Activated CD4-positive, alpha-beta T cell treated with anti-CD3 and anti-CD28 coated beads, Interleukin-2, amount 10 ng/mL, durations not matched to agents 7 days and 5 days (primary cell): ENCODE measurements at regions of chr2 and their contacts with region 1.

Region 1: GRCh38 chr2:64653349-64654062 is at the start of gene SERTAD2:
- DNase-seq: peak; percentile 87
- H3K4me3 Mint-ChIP-seq: peak within 1 kb of the TSS; percentile 88
- H3K27ac Mint-ChIP-seq: peak within 1 kb of the TSS; percentile 91
- H3K4me1 Mint-ChIP-seq: peaks cover 65% of the 10 kb centered on the region
- H3K27me3 Mint-ChIP-seq: no peaks in the 10 kb centered on the region
- total RNA-seq, gene SERTAD2: 16.9 to 18.7 TPM

Region 2: DNA sequence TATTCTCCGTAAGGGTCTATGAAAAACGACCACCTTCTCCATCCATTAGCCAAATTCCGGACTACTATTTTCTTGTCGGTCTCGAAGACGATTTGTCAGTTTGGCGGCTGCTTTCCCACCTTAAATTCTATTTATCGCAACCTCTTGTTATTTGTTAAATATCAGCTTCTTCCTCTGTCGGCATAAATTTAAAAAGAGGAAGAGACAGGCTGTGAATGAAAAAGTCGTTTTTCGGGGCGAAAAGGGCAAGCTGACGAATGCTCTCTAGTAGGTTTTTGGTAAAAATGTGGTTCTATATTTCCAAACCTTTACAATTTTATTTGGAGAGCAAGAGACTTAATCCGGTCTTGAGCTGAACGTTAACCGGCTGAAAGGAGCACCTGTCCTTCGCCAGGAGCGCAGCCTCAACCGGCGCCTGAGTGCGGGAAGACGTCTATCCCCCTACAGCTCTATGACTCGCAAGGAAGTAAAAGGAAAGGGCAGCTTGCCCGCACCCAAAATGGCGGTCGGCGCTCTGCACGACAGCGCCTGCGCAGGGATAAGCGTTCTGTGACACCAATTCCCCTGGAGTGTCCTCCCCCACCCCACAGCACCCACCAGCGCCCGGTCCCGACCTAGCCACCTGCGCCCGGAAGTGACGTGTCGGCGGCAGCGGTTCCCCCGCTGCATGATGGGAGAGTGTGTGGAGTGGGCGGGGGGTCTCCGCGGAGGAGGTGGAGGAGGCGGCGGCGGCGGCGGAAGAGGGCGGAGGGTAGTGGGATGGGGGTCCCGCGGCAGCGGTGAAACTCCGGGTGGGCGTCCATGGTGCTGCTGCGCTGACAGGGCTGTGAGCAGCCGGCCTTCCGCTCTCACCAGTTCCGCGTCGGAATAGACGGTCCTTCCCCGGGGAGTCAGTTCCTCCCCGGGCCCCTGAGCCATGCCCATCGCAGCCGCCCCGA is 129.6 kb before region 1 on chr2 and contains the start of gene AFTPH:
- CTCF ChIA-PET with region 1: interaction called, 11 read pairs
- POLR2A ChIA-PET with region 1: no interaction called
- DNase-seq: peak; percentile 100
- H3K4me3 Mint-ChIP-seq: peak within 1 kb of the TSS; percentile 99
- H3K27ac Mint-ChIP-seq: peak within 1 kb of the TSS; percentile 99
- H3K4me1 Mint-ChIP-seq: peaks cover 41% of the 10 kb centered on the region
- H3K27me3 Mint-ChIP-seq: peaks cover 5% of the 10 kb centered on the region
- total RNA-seq, gene AFTPH: 31.1 to 38.9 TPM

Region 3: GRCh38 chr2:64675860-64676259 is 22.4 kb after region 1 on chr2:
- CTCF ChIA-PET with region 1: interaction called, 18 read pairs
- POLR2A ChIA-PET with region 1: no interaction called
- DNase-seq: peak; percentile 22
- H3K4me3 Mint-ChIP-seq: no peak overlapping the region
- H3K27ac Mint-ChIP-seq: no peak overlapping the region
- H3K4me1 Mint-ChIP-seq: peaks cover 36% of the 10 kb centered on the region
- H3K27me3 Mint-ChIP-seq: no peaks in the 10 kb centered on the region

Region 4: GRCh38 chr2:64727013-64727767 is 73.7 kb after region 1 on chr2:
- CTCF ChIA-PET with region 1: interaction called, 12 read pairs
- POLR2A ChIA-PET with region 1: no interaction called
- DNase-seq: peak; percentile 24
- H3K4me3 Mint-ChIP-seq: peak overlapping the region; percentile 10
- H3K27ac Mint-ChIP-seq: peak overlapping the region; percentile 89
- H3K4me1 Mint-ChIP-seq: peaks cover 55% of the 10 kb centered on the region
- H3K27me3 Mint-ChIP-seq: no peaks in the 10 kb centered on the region

Region 5: DNA sequence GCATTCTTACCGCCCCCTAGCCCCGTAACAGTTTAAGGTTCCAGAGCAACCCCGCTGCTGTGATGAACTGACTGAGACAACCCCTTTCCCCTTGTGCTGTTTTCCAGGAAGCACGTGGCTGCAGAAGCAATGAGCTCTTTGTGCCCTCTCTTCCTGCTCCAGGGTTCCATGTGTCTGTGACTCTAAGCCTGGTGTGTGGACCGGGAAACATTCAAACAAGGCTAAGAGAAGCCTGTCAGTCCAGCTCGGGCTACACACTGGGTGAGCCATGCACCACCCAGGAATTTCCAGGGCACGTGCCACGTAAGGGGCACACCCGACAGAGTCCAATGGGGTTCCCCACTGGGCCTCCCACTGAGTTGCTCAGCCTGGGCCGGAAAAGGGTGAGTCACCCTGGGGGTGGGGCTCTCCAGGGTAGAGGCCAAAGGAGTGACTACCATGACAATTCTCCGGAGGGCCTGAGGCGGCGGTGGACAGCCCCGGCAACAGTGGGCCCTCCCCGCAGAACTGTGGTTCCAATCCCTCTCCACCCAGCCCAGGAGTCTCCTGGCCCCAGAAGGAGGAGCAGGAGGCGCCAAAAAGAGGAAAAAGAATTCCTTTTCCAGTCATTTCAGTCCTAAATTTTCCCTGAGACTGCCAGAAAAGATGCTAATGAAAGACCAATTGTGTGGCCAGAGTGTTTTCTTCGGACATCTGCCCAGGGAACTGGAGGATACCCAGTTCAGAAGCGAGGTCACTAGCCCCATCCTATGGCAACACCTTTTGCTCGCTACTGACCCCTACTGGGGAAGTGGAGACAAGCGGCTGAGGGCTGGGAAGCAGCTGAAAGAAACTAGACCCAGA is 177.8 kb after region 1 on chr2:
- CTCF ChIA-PET with region 1: interaction called, 15 read pairs
- POLR2A ChIA-PET with region 1: no interaction called
- DNase-seq: peak; percentile 85
- H3K4me3 Mint-ChIP-seq: no peak overlapping the region
- H3K27ac Mint-ChIP-seq: peak overlapping the region; percentile 20
- H3K4me1 Mint-ChIP-seq: peaks cover 16% of the 10 kb centered on the region
- H3K27me3 Mint-ChIP-seq: peaks cover 16% of the 10 kb centered on the region

Region 6: DNA sequence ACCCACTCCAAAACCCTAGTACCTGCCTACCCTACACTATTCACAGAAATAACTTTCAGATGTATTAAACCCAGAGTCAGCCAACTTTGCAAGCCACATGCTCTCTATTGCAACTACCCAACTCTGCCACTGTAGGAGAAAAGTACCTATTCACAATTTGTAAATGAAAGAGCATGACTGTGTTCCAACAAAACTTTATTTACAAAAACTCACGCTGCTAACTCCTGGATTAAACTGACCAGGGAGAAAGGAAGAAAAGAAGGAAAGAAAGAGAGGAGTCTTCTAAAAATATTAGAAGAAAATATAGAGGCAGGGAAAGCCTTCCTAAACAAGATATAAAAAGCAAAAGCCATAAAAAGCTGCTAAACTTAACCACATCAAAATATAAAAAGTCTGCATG is 360.3 kb after region 1 on chr2:
- CTCF ChIA-PET with region 1: no interaction called
- POLR2A ChIA-PET with region 1: no interaction called
- DNase-seq: no peak
- H3K4me3 Mint-ChIP-seq: no peak overlapping the region
- H3K27ac Mint-ChIP-seq: no peak overlapping the region
- H3K4me1 Mint-ChIP-seq: peaks cover 16% of the 10 kb centered on the region
- H3K27me3 Mint-ChIP-seq: no peaks in the 10 kb centered on the region